AG04449 (cell line): ENCODE measurements at regions of chr9 and their contacts with region 1.

Region 1: GRCh38 chr9:83334320-83334719 is 203.9 kb downstream of the FRMD3 start:
- DNase-seq: peak; percentile 53
- H3K4me3 ChIP-seq: no peak overlapping the region
- CTCF ChIP-seq: peak; percentile 85

Region 2: GRCh38 chr9:82991671-82992070 is 342.6 kb before region 1 on chr9:
- CTCF ChIA-PET with region 1: no interaction called
- POLR2A ChIA-PET with region 1: no interaction called
- DNase-seq: no peak
- H3K4me3 ChIP-seq: no peak overlapping the region
- CTCF ChIP-seq: no peak

Region 3: GRCh38 chr9:83144492-83144891 is 189.8 kb before region 1 on chr9:
- CTCF ChIA-PET with region 1: no interaction called
- POLR2A ChIA-PET with region 1: no interaction called
- DNase-seq: no peak
- H3K4me3 ChIP-seq: no peak overlapping the region
- CTCF ChIP-seq: no peak

Region 4: GRCh38 chr9:83204047-83204446 is 130.3 kb before region 1 on chr9:
- CTCF ChIA-PET with region 1: no interaction called
- POLR2A ChIA-PET with region 1: no interaction called
- DNase-seq: no peak
- H3K4me3 ChIP-seq: no peak overlapping the region
- CTCF ChIP-seq: no peak

Region 5: DNA sequence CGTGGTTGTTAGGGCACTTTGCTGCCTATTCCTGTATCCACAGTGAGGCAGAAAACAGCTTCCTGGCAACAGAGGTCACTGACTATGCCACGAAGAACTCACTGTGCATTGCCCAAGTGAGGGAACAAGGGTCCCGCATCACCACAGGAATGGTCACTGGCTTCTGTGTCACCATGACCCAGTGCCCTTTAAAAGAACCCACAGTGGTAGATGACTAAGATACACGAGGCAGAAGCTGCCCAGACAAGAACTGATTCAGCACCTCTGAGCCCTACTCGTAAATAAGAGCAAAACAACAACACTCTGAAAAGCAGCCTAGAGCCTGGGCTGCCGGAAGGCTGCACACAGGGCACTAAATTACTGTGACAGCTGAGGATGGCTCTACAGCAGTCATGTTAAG is 34.7 kb before region 1 on chr9:
- CTCF ChIA-PET with region 1: interaction called, 19 read pairs
- POLR2A ChIA-PET with region 1: no interaction called
- DNase-seq: no peak
- H3K4me3 ChIP-seq: no peak overlapping the region
- CTCF ChIP-seq: no peak

Region 6: GRCh38 chr9:83526901-83527300 is 192.6 kb after region 1 on chr9:
- CTCF ChIA-PET with region 1: interaction called, 12 read pairs
- POLR2A ChIA-PET with region 1: no interaction called
- DNase-seq: no peak
- H3K4me3 ChIP-seq: no peak overlapping the region
- CTCF ChIP-seq: no peak

Region 7: GRCh38 chr9:83544002-83544698 is 209.8 kb after region 1 on chr9:
- CTCF ChIA-PET with region 1: interaction called, 359 read pairs
- POLR2A ChIA-PET with region 1: no interaction called
- DNase-seq: peak; percentile 68
- H3K4me3 ChIP-seq: no peak overlapping the region
- CTCF ChIP-seq: peak; percentile 71

Region 8: GRCh38 chr9:83622939-83623678 is 288.8 kb after region 1 on chr9 and contains the start of gene IDNK:
- CTCF ChIA-PET with region 1: interaction called, 21 read pairs
- POLR2A ChIA-PET with region 1: no interaction called
- DNase-seq: no peak
- H3K4me3 ChIP-seq: peak within 1 kb of the TSS; percentile 65
- CTCF ChIP-seq: no peak